Activated CD4-positive, alpha-beta memory T cell treated with anti-CD3 and anti-CD28 coated beads for 36 hours (primary cell): ENCODE measurements at regions of chr12 and their contacts with region 1.

Region 1: DNA sequence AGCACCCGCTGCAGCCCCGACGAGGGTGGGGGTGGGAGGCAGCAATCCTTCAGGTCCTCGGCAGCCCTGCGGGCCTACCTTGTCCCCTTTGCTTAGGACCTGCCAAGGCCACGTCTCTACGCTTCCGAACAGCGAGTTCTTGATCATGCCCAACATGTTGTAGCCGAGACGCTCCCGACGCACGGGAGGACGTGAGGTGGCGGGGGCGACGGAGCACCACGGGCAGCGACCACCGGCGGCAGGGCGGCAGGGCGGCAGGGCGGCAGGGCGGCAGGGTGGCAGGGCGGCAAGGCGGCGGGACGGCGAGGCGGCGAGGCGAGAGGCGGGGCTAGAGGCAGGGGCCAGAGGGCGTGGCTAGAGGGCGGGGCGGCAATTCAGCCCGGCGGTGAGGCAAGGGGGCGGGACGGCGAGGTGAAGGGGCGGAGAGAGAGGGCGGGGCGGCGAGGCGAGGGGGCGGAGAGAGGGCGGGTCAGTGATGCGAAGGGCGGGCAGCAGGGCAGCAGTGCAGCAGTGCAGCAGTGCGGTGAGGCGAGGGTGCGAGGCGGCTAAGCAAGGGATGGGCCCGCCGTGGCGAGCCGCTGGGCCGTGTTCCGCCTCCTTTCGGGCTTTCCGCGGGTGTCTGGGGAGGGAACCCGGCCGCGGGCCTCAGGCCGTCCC is at the start of gene HEBP1:
- DNase-seq: peak; percentile 97
- H3K4me3 Mint-ChIP-seq: peak within 1 kb of the TSS; percentile 82
- H3K27ac Mint-ChIP-seq: peak within 1 kb of the TSS; percentile 53
- H3K4me1 Mint-ChIP-seq: peaks cover 25% of the 10 kb centered on the region
- H3K27me3 Mint-ChIP-seq: peaks cover 6% of the 10 kb centered on the region
- total RNA-seq, gene HEBP1: 20.5 to 22.4 TPM

Region 2: DNA sequence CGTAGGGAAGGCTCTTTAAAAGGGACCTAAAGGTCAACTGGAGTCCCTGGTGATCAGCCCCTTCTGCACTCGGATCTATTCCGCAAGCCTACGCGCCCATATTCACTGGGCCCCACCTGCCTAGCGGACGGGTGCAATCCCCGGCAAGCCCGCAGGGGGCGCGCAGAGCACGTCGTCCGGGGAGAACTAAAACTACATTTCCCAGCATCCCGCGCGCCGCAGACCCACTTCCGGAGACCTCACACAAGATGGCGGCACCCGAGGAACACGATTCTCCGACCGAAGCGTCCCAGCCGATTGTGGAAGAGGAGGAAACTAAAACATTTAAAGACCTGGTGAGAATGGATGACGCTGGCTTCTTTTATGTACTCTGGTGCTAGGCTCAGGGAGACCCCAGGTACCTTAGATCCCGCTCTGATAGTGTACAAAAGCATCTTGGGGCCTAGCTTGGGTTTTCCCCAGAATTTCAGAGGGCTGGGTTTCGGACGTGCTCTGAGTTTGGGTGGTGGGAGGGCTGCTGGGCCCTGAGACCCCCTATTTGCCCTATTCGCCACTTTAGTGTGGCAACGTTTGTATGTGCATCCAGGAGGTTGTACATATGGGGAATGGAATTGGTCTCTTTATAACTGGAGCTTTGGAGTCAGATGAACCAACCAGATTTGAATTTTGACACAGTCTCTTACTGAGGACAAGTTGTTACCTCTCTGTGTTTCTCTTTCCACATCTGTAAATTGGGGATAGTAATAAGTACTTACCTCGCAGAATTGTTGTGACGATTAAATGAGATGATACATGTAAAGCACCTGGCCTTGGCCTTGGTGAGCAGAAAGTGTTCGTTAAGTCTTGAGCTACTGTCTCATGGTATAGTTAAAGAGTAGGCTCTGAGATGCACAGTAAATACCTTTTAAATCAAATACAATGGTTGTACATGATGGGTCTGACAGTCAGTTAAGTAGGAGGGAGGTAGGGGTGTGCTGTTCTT is 186.7 kb before region 1 on chr12 and contains the start of gene DDX47:
- CTCF ChIA-PET with region 1: no interaction called
- POLR2A ChIA-PET with region 1: no interaction called
- intact Hi-C with region 1: loop called (anchors 1 kb)
- DNase-seq: peak; percentile 98
- H3K4me3 Mint-ChIP-seq: peak within 1 kb of the TSS; percentile 93
- H3K27ac Mint-ChIP-seq: peak within 1 kb of the TSS; percentile 95
- H3K4me1 Mint-ChIP-seq: peaks cover 59% of the 10 kb centered on the region
- H3K27me3 Mint-ChIP-seq: no peaks in the 10 kb centered on the region
- total RNA-seq, gene DDX47: 75.2 to 75.3 TPM

Region 3: GRCh38 chr12:12975322-12976077 is 24.6 kb before region 1 on chr12:
- CTCF ChIA-PET with region 1: no interaction called
- POLR2A ChIA-PET with region 1: no interaction called
- intact Hi-C with region 1: no loop called
- DNase-seq: peak; percentile 24
- H3K4me3 Mint-ChIP-seq: no peak overlapping the region
- H3K27ac Mint-ChIP-seq: no peak overlapping the region
- H3K4me1 Mint-ChIP-seq: no peaks in the 10 kb centered on the region
- H3K27me3 Mint-ChIP-seq: no peaks in the 10 kb centered on the region

Region 4: DNA sequence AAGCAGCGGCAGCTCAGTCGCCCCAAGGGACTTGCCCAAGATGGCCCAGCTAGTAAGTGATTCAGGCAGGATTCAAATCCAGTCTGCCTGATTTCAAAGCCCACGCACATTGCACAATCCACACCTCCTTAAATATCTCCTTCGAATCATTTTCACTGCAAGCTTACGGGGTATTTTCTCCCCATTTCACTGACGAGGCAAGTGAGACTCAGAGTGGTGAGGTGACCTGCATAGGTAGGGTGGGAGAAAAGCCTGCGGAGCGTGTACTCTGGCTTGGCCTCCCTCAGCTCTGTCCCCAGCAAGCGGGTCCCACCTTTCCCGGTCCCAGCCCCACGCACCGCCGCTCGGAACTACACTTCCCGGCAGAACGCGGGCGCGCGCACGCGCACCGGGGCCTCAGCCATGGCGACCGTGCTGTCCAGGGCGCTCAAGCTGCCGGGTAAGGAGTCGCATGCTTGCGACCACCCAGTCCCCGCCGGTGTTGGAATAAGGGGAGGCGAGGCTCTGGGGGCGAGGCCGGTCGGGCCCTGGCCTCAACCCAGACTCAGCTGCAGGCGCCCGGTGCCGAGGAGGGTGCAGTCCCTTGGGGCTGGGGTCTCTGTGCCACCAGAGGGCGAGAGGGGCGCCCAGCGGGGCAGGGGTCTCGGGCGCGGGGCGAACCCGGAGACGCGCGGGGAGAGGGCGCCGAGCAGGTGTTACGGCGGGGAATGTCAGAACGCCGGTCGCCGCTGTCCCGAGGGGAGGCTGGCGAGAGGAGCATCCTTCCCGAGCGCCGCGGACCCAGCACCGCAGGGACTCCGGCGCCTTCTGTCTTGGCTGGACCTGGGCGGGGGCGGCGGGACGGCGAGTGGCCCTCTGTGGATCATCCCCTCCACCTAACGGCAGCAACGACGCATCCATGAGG is 44.2 kb after region 1 on chr12 and contains the start of gene FAM234B:
- CTCF ChIA-PET with region 1: no interaction called
- POLR2A ChIA-PET with region 1: no interaction called
- intact Hi-C with region 1: loop called (anchors 1 kb)
- DNase-seq: peak; percentile 78
- H3K4me3 Mint-ChIP-seq: peak within 1 kb of the TSS; percentile 80
- H3K27ac Mint-ChIP-seq: no peak within 1 kb of the TSS
- H3K4me1 Mint-ChIP-seq: peaks cover 25% of the 10 kb centered on the region
- H3K27me3 Mint-ChIP-seq: peaks cover 3% of the 10 kb centered on the region
- total RNA-seq, gene FAM234B: 6.8 TPM

Region 5: GRCh38 chr12:13173012-13173932 is 173.2 kb after region 1 on chr12:
- CTCF ChIA-PET with region 1: no interaction called
- POLR2A ChIA-PET with region 1: no interaction called
- intact Hi-C with region 1: no loop called
- DNase-seq: peak; percentile 78
- H3K4me3 Mint-ChIP-seq: no peak overlapping the region
- H3K27ac Mint-ChIP-seq: no peak overlapping the region
- H3K4me1 Mint-ChIP-seq: peaks cover 19% of the 10 kb centered on the region
- H3K27me3 Mint-ChIP-seq: peaks cover 21% of the 10 kb centered on the region